Ovary (tissue), 10 donors: ENCODE measurements at regions of chr4 and their contacts with region 1.

Region 1: DNA sequence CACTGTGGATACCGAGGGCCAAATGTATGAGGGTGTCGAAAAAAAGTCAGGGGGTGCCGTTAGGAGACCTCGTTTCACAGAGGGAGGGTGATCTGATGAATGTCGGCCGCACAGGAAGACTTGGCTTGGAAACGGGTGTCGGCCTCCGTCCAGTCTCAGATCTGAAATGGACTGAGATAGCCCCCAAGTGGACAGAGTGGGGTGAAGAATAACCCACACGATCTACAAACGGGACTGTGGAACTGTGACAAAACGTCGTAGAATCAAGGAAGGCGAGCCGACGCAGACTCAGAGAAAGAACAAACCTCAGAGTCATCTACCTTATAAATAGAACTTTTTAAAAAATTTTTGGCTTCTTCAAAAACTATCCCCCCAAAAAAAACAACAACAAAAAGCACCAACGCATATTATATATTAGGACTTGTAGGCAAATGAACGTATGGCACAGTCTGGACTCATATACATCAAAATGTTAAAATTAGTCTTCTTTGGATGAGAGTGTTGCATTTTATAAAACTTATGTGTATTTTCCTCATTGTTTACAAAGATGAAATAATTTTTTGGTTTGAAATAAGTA is 63.8 kb upstream of the IRF2 start:
- DNase-seq: peak; percentile 86 to 92 (median 89)
- H3K4me3 ChIP-seq: peak overlapping the region; percentile 53
- H3K27ac ChIP-seq: peak overlapping the region; percentile 43 to 97
- H3K4me1 ChIP-seq: peaks cover 13% of the 10 kb centered on the region
- H3K27me3 ChIP-seq: no peaks in the 10 kb centered on the region
- CTCF ChIP-seq: peak; percentile 50 to 83 (median 77)
- EP300 ChIP-seq: no peak
- POLR2A ChIP-seq: peak; percentile 10

Region 2: GRCh38 chr4:183840311-183840710 is 697.8 kb before region 1 on chr4:
- intact Hi-C with region 1: loop called in 1 of 4 experiments (anchors 10 kb)
- DNase-seq: peak; percentile 72 to 90 (median 87)
- H3K4me3 ChIP-seq: no peak overlapping the region
- H3K27ac ChIP-seq: no peak overlapping the region
- H3K4me1 ChIP-seq: no peaks in the 10 kb centered on the region
- H3K27me3 ChIP-seq: no peaks in the 10 kb centered on the region
- CTCF ChIP-seq: peak; percentile 74 to 86 (median 84)
- EP300 ChIP-seq: no peak
- POLR2A ChIP-seq: no peak

Region 3: DNA sequence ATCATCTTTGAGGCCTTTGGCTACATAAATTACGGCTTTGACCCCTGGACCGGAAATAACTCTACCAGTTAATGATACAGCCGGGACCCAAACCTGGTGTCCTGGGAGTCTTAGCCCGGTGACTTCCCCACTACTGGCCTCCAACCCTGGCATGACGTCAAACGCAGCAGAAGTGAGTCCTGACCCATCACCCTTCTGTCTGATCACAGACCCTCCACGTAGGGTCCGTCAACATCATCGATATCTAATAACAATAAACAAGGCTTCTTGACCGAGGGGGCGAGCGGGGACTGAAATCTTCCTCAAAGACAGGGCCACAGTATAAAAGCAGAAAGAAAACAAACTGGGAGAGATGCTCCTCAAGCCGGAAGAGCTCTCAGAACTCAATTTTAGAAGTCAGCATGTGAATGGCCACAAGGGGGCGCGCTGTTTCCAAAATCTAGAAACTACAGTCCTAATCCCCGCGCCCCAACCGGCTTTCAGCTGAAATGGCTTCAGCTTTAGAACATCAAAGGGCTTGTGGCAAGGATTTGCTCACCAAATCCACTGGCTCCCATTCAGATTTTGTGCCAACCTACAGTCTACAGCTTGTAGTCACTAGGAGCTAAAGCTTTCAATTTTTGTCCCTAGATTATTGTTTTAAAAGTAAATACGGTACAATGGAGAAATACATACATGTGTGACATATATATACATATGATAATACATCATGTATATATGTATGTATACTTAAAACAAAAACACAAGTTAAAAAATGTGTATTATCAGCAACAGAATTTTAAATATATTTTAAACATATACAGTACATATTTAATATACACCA is 274.0 kb before region 1 on chr4:
- intact Hi-C with region 1: loop called in 3 of 4 experiments (anchors 2 to 5 kb)
- DNase-seq: peak; percentile 87 to 96 (median 95)
- H3K4me3 ChIP-seq: no peak overlapping the region
- H3K27ac ChIP-seq: no peak overlapping the region
- H3K4me1 ChIP-seq: peaks cover 1% of the 10 kb centered on the region
- H3K27me3 ChIP-seq: no peaks in the 10 kb centered on the region
- CTCF ChIP-seq: peak; percentile 89 to 95 (median 93)
- EP300 ChIP-seq: no peak
- POLR2A ChIP-seq: no peak

Region 4: GRCh38 chr4:184282251-184282713 is 255.8 kb before region 1 on chr4:
- intact Hi-C with region 1: loop called in 3 of 4 experiments (anchors 2 to 10 kb)
- DNase-seq: no peak
- H3K4me3 ChIP-seq: no peak overlapping the region
- H3K27ac ChIP-seq: no peak overlapping the region
- H3K4me1 ChIP-seq: peaks cover 2% of the 10 kb centered on the region
- H3K27me3 ChIP-seq: no peaks in the 10 kb centered on the region
- CTCF ChIP-seq: no peak
- EP300 ChIP-seq: no peak
- POLR2A ChIP-seq: no peak

Region 5: GRCh38 chr4:184287697-184288255 is 250.3 kb before region 1 on chr4:
- intact Hi-C with region 1: loop called in 3 of 4 experiments (anchors 2 to 10 kb)
- DNase-seq: no peak
- H3K4me3 ChIP-seq: no peak overlapping the region
- H3K27ac ChIP-seq: peak overlapping the region in 1 of 2 donors; percentile 57
- H3K4me1 ChIP-seq: peaks cover 8% of the 10 kb centered on the region
- H3K27me3 ChIP-seq: no peaks in the 10 kb centered on the region
- CTCF ChIP-seq: peak in 1 of 3 donors; percentile 25
- EP300 ChIP-seq: no peak
- POLR2A ChIP-seq: no peak

Region 6: DNA sequence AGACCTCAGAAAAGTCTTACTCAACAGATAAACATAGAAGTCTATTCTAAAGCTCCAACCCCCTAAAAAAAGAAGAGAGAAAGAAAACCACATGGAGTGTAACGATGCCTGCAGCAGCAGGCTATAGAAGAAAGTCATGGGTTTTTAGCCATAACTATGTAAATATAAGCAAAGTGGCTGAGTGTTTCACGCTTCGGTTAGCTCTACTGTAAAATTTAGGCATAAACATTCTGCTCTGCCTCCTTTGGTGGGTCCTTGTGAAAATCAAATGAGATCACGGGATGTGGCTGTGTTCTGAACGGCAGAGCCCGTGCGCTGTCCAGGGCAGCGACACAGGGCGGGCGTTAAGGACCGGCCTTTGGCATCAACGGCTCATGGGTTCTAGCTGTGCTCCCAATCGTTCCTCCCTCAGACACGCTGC is 142.1 kb before region 1 on chr4:
- intact Hi-C with region 1: loop called in 2 of 4 experiments (anchors 10 kb)
- DNase-seq: no peak
- H3K4me3 ChIP-seq: no peak overlapping the region
- H3K27ac ChIP-seq: no peak overlapping the region
- H3K4me1 ChIP-seq: peaks cover 22% of the 10 kb centered on the region
- H3K27me3 ChIP-seq: no peaks in the 10 kb centered on the region
- CTCF ChIP-seq: no peak
- EP300 ChIP-seq: no peak
- POLR2A ChIP-seq: no peak

Region 7: GRCh38 chr4:184474263-184475095 is 63.6 kb before region 1 on chr4 and contains the start of gene IRF2:
- intact Hi-C with region 1: loop called (anchors 2 to 10 kb)
- DNase-seq: peak; percentile 96 to 98 (median 97)
- H3K4me3 ChIP-seq: peak within 1 kb of the TSS; percentile 67
- H3K27ac ChIP-seq: peak within 1 kb of the TSS; percentile 91 to 95
- H3K4me1 ChIP-seq: peaks cover 1% of the 10 kb centered on the region
- H3K27me3 ChIP-seq: no peaks in the 10 kb centered on the region
- CTCF ChIP-seq: peak in 1 of 3 donors; percentile 4
- EP300 ChIP-seq: peak; percentile 95
- POLR2A ChIP-seq: peak; percentile 97
- total RNA-seq, gene IRF2: 27.8 to 68.4 (median 40.7) TPM